B cell (primary cell): ENCODE measurements at regions of chr20 and their contacts with region 1.

Region 1: GRCh38 chr20:34363062-34363464 is at the start of gene ITCH:
- DNase-seq: peak; percentile 94
- ATAC-seq: peak; percentile 96
- H3K4me3 ChIP-seq: peak within 1 kb of the TSS; percentile 46 to 91 (median 88)
- H3K4me3 Mint-ChIP-seq: peak within 1 kb of the TSS; percentile 97
- H3K27ac ChIP-seq: peak within 1 kb of the TSS; percentile 81 to 96
- H3K27ac Mint-ChIP-seq: peak within 1 kb of the TSS; percentile 98
- H3K4me1 ChIP-seq: peaks cover 34 to 38% of the 10 kb centered on the region in 2 donors
- H3K4me1 Mint-ChIP-seq: peaks cover 35% of the 10 kb centered on the region
- H3K27me3 ChIP-seq: no peaks in the 10 kb centered on the region
- H3K27me3 Mint-ChIP-seq: no peaks in the 10 kb centered on the region
- CTCF ChIP-seq: no peak
- total RNA-seq, gene ITCH: 89.6 and 110 TPM in 2 replicates

Region 2: GRCh38 chr20:33130568-33131061 is 1232.4 kb before region 1 on chr20:
- CTCF ChIA-PET with region 1: no interaction called
- POLR2A ChIA-PET with region 1: no interaction called
- intact Hi-C with region 1: no loop called
- DNase-seq: no peak
- ATAC-seq: no peak
- H3K4me3 ChIP-seq: no peak overlapping the region
- H3K4me3 Mint-ChIP-seq: no peak overlapping the region
- H3K27ac ChIP-seq: no peak overlapping the region
- H3K27ac Mint-ChIP-seq: no peak overlapping the region
- H3K4me1 ChIP-seq: no peaks in the 10 kb centered on the region
- H3K4me1 Mint-ChIP-seq: no peaks in the 10 kb centered on the region
- H3K27me3 ChIP-seq: peaks cover 0 to 6% (median 1%) of the 10 kb centered on the region in 4 experiments
- H3K27me3 Mint-ChIP-seq: peaks cover 25% of the 10 kb centered on the region
- CTCF ChIP-seq: no peak

Region 3: DNA sequence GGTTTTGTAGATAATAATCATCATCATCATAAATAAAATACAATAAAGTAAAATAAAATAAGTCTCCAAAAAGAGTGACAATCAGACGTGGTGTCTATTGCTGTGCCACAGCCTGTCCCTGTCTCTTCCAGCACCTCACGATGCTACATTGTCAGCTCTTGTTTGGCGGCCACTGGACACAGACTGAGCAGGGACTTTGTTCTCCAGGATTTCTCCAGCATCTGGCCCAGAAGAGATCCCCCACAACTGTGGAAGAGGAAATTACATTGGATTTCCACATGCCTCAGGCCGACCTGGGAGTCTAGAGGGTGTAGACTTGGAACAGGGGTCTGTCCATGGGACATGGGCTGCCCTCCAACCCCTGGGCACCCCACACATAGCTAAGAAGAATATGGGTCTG is 408.6 kb before region 1 on chr20:
- CTCF ChIA-PET with region 1: no interaction called
- POLR2A ChIA-PET with region 1: no interaction called
- intact Hi-C with region 1: no loop called
- DNase-seq: no peak
- ATAC-seq: no peak
- H3K4me3 ChIP-seq: no peak overlapping the region
- H3K4me3 Mint-ChIP-seq: no peak overlapping the region
- H3K27ac ChIP-seq: no peak overlapping the region
- H3K27ac Mint-ChIP-seq: no peak overlapping the region
- H3K4me1 ChIP-seq: no peaks in the 10 kb centered on the region
- H3K4me1 Mint-ChIP-seq: no peaks in the 10 kb centered on the region
- H3K27me3 ChIP-seq: peaks cover 0 to 9% (median 0%) of the 10 kb centered on the region in 4 experiments
- H3K27me3 Mint-ChIP-seq: peaks cover 18% of the 10 kb centered on the region
- CTCF ChIP-seq: no peak

Region 4: GRCh38 chr20:34375977-34376430 is 12.9 kb after region 1 on chr20:
- CTCF ChIA-PET with region 1: no interaction called
- POLR2A ChIA-PET with region 1: interaction called, 13 read pairs
- intact Hi-C with region 1: no loop called
- DNase-seq: no peak
- ATAC-seq: no peak
- H3K4me3 ChIP-seq: no peak overlapping the region
- H3K4me3 Mint-ChIP-seq: no peak overlapping the region
- H3K27ac ChIP-seq: no peak overlapping the region
- H3K27ac Mint-ChIP-seq: no peak overlapping the region
- H3K4me1 ChIP-seq: no peaks in the 10 kb centered on the region
- H3K4me1 Mint-ChIP-seq: peaks cover 19% of the 10 kb centered on the region
- H3K27me3 ChIP-seq: no peaks in the 10 kb centered on the region
- H3K27me3 Mint-ChIP-seq: no peaks in the 10 kb centered on the region
- CTCF ChIP-seq: no peak

Region 5: GRCh38 chr20:34389206-34389953 is 26.3 kb after region 1 on chr20:
- CTCF ChIA-PET with region 1: no interaction called
- POLR2A ChIA-PET with region 1: interaction called, 11 read pairs
- intact Hi-C with region 1: no loop called
- DNase-seq: no peak
- ATAC-seq: no peak
- H3K4me3 ChIP-seq: no peak overlapping the region
- H3K4me3 Mint-ChIP-seq: no peak overlapping the region
- H3K27ac ChIP-seq: peak overlapping the region in 1 of 2 donors; percentile 13
- H3K27ac Mint-ChIP-seq: peak overlapping the region; percentile 10
- H3K4me1 ChIP-seq: peaks cover 28 to 29% of the 10 kb centered on the region in 2 donors
- H3K4me1 Mint-ChIP-seq: peaks cover 47% of the 10 kb centered on the region
- H3K27me3 ChIP-seq: no peaks in the 10 kb centered on the region
- H3K27me3 Mint-ChIP-seq: no peaks in the 10 kb centered on the region
- CTCF ChIP-seq: no peak

Region 6: DNA sequence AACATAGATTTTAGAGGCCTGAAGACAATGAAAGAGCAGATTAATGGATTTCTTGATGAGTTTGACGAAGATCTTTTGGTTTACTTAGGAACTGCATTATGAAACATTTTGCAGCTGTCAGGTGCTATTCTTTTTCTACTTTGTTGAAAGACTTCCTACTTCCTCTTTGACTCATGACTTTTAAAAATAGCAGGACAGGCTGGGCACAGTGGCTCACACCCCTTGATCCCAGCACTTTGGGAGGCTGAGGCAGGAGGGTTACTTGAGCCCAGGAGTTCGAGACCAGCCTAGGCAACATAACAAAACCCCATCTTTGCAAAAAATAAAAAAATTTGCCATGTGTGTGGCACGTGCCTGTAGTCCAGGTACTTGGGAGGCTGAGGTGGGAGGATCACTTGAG is 52.0 kb after region 1 on chr20:
- CTCF ChIA-PET with region 1: no interaction called
- POLR2A ChIA-PET with region 1: no interaction called
- intact Hi-C with region 1: loop called (anchors 10 kb)
- DNase-seq: peak; percentile 31
- ATAC-seq: no peak
- H3K4me3 ChIP-seq: peak overlapping the region in 1 of 5 experiments; percentile 12
- H3K4me3 Mint-ChIP-seq: peak overlapping the region; percentile 64
- H3K27ac ChIP-seq: peak overlapping the region; percentile 35 to 42
- H3K27ac Mint-ChIP-seq: peak overlapping the region; percentile 74
- H3K4me1 ChIP-seq: peaks cover 16 to 20% of the 10 kb centered on the region in 2 donors
- H3K4me1 Mint-ChIP-seq: peaks cover 18% of the 10 kb centered on the region
- H3K27me3 ChIP-seq: no peaks in the 10 kb centered on the region
- H3K27me3 Mint-ChIP-seq: no peaks in the 10 kb centered on the region
- CTCF ChIP-seq: no peak